Heart left ventricle (tissue), 16 donors: ENCODE measurements at regions of chr17 and their contacts with region 1.

Region 1: DNA sequence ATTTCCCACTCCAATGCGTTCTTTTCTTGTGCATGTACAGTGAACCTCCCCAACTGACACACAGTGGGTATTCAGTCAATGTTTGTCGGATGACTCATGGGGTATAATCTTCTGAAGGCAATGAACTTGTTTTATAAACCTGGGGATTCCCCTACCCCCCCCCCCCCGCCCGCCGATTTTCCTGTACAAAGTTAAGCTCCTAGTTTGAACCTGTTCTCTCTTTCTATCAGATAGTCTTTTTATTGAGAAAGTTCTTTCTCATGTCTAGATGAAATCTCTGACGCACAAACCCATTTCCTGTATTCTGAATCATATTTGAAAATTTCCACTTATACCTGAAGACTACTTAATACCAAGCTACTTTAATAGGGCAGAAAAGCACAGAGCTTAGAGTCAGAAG is 338.3 kb downstream of the CA10 start:
- DNase-seq: no peak
- ATAC-seq: no peak
- H3K4me3 ChIP-seq: no peak overlapping the region
- H3K27ac ChIP-seq: no peak overlapping the region
- H3K4me1 ChIP-seq: no peaks in the 10 kb centered on the region
- H3K27me3 ChIP-seq: peaks cover 0 to 4% (median 0%) of the 10 kb centered on the region in 9 donors
- CTCF ChIP-seq: no peak
- POLR2A ChIP-seq: no peak

Region 2: DNA sequence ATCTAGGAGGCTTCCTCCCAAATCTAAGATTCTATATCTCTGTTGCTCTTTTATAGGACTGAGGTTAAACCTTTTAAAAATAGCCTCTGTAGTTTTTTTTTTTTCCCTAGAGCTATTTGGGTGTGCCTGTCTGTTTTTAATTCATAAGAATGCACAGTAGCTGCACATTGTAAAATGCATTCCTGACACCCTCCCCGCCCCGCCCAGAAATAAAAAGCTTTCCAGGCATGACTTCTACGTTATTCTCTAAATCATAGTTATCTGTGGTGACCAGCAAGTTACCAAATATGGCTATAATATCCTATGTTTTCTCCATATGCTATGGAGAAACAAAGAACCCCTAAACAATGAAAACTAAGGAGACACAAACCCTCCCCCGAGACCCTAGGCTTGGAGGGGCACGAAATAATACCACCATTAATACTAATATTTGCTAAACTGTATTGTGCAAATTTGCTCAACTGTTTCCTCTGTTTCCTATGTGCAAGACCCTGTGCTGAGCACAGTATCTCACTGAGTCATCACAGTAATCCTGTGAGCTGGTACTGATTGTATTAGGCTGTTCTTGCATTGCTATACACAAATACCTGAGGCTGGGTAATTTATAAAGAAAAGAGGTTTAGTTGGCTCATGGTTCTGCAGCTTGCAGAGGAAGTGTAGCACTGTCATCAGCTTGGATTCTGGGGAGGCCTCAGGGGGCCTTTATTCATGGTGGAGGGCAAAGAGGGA is 50.1 kb before region 1 on chr17:
- intact Hi-C with region 1: loop called in 1 of 10 experiments (anchors 5 kb)
- DNase-seq: no peak
- ATAC-seq: no peak
- H3K4me3 ChIP-seq: no peak overlapping the region
- H3K27ac ChIP-seq: no peak overlapping the region
- H3K4me1 ChIP-seq: no peaks in the 10 kb centered on the region
- H3K27me3 ChIP-seq: peaks cover 0 to 6% (median 0%) of the 10 kb centered on the region in 9 donors
- CTCF ChIP-seq: no peak
- POLR2A ChIP-seq: no peak

Region 3: DNA sequence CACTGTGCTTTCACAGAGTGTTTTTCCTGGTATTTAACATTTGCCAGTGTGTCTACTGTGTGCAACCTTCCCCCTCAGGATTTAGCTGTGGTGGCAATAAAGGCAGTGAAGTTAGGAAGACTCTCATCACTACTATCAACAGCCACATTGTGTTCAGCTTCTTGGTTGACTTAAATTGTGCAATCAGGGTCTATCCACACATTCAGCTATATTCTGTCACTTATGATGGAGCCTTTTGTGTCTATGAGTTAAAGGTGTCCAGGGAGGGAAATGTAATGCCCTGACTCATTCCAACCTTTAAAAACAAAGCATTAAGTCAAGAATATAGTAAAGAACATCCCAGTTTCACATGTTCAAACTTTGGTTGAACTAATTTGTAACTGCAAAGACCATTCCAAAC is 161.9 kb after region 1 on chr17:
- intact Hi-C with region 1: no loop called
- DNase-seq: no peak
- ATAC-seq: no peak
- H3K4me3 ChIP-seq: no peak overlapping the region
- H3K27ac ChIP-seq: no peak overlapping the region
- H3K4me1 ChIP-seq: no peaks in the 10 kb centered on the region
- H3K27me3 ChIP-seq: no peaks in the 10 kb centered on the region
- CTCF ChIP-seq: no peak
- POLR2A ChIP-seq: no peak